PC-9 (cell line): ENCODE measurements at regions of chr7 and their contacts with region 1.

Region 1: GRCh38 chr7:18345641-18346234 is 149.8 kb upstream of the HDAC9 start:
- DNase-seq: peak in 1 of 2 experiments; percentile 51
- H3K4me3 ChIP-seq: no peak overlapping the region
- H3K27ac ChIP-seq: no peak overlapping the region
- H3K4me1 ChIP-seq: no peaks in the 10 kb centered on the region
- H3K27me3 ChIP-seq: no peaks in the 10 kb centered on the region
- CTCF ChIP-seq: peak; percentile 98

Region 2: GRCh38 chr7:16695621-16696237 is 1650.0 kb before region 1 on chr7:
- CTCF ChIA-PET with region 1: no interaction called
- POLR2A ChIA-PET with region 1: no interaction called
- intact Hi-C with region 1: loop called (anchors 5 kb)
- DNase-seq: peak; percentile 37 to 63
- H3K4me3 ChIP-seq: no peak overlapping the region
- H3K27ac ChIP-seq: no peak overlapping the region
- H3K4me1 ChIP-seq: no peaks in the 10 kb centered on the region
- H3K27me3 ChIP-seq: no peaks in the 10 kb centered on the region
- CTCF ChIP-seq: peak; percentile 89

Region 3: DNA sequence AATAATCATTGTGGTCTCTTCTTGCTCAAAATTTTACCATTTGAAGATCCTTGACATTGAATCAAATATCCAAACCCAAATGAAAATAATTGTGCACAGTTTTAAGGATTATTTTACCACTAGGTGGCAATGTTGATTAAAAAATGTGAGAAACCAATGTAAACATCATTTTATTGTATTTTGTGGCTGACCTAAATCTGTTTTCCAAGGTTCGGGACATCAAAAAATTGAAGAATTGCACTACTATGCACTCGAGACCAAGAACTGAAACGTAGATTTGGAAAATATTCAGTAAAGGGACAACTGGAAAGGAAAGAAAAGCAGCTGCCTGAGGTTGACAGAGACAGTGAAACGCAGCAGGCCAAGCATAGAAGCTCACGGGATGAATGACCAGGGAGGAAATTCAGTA is 664.8 kb before region 1 on chr7:
- CTCF ChIA-PET with region 1: no interaction called
- POLR2A ChIA-PET with region 1: no interaction called
- intact Hi-C with region 1: loop called (anchors 1 kb)
- DNase-seq: peak in 1 of 2 experiments; percentile 60
- H3K4me3 ChIP-seq: no peak overlapping the region
- H3K27ac ChIP-seq: no peak overlapping the region
- H3K4me1 ChIP-seq: no peaks in the 10 kb centered on the region
- H3K27me3 ChIP-seq: no peaks in the 10 kb centered on the region
- CTCF ChIP-seq: peak; percentile 91

Region 4: DNA sequence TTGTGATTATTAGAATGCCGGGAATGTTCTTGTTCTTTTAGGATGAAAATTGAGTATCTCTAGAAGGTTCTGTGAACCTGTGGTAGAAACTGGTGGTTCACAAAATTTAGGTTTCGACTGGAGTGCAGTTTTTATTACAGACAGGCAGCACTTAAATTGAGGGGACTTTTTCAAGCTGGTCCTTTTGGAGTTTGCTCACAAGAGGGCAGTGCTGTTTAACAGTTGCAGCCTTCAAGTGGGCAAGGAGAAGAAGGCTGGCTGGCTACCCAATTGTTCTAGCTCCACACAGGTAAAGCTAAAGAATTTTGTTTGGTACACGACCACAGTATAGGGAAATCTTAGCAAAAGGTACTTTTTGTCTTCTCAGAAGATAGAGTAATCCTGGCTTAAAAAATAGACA is 639.0 kb before region 1 on chr7:
- CTCF ChIA-PET with region 1: interaction called, 3 read pairs
- POLR2A ChIA-PET with region 1: no interaction called
- intact Hi-C with region 1: loop called (anchors 1 kb)
- DNase-seq: peak; percentile 52 to 61
- H3K4me3 ChIP-seq: no peak overlapping the region
- H3K27ac ChIP-seq: no peak overlapping the region
- H3K4me1 ChIP-seq: no peaks in the 10 kb centered on the region
- H3K27me3 ChIP-seq: no peaks in the 10 kb centered on the region
- CTCF ChIP-seq: peak; percentile 92

Region 5: DNA sequence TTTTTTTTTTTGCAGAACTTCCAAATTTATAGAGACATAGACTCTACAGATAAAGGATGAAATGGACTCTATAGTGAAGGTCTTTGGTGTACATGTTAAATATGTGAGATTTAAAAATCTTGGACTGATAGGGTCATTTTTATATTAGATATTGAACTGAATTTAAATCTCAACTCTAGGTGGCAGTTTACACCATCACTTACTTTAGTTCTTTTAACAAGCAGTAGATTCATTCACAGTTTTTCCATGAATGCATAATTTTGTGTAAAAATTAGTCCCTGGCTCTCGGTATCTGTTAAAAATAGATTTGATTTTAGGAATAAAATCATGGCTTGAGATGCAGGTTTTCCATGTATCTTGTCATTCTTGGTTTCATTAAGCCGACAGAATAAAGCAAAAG is 374.3 kb before region 1 on chr7:
- CTCF ChIA-PET with region 1: no interaction called
- POLR2A ChIA-PET with region 1: no interaction called
- intact Hi-C with region 1: loop called (anchors 1 kb)
- DNase-seq: peak in 1 of 2 experiments; percentile 31
- H3K4me3 ChIP-seq: no peak overlapping the region
- H3K27ac ChIP-seq: no peak overlapping the region
- H3K4me1 ChIP-seq: no peaks in the 10 kb centered on the region
- H3K27me3 ChIP-seq: no peaks in the 10 kb centered on the region
- CTCF ChIP-seq: peak; percentile 58

Region 6: GRCh38 chr7:19146699-19147098 is 801.0 kb after region 1 on chr7:
- CTCF ChIA-PET with region 1: no interaction called
- POLR2A ChIA-PET with region 1: no interaction called
- intact Hi-C with region 1: no loop called
- DNase-seq: no peak
- H3K4me3 ChIP-seq: no peak overlapping the region
- H3K27ac ChIP-seq: no peak overlapping the region
- H3K4me1 ChIP-seq: no peaks in the 10 kb centered on the region
- H3K27me3 ChIP-seq: peaks cover 9% of the 10 kb centered on the region; the same call in 1 of the 2 replicates
- CTCF ChIP-seq: no peak